Right ventricle myocardium inferior (tissue), 1 donor: ENCODE measurements at regions of chr17 and their contacts with region 1.

Region 1: DNA sequence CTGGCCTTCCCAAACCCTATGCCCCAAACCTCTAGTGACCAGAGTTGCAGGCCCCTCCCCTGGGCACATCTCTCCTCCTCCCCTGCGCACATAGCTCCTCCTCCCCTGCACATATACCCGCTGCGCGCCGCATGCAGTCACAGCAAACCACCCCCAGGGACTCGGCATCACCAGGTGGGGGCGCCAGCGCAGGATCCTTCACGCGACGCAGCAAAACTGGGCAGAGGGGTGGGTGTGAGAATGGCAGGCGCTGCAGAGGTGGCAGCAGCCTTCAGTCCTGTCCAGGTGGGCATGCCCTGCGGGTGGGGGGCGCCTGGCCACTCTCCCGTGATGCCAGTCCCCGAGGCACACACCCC is 5.6 kb downstream of the CORO6 start:
- DNase-seq: peak; percentile 89
- ATAC-seq: no peak

Region 2: DNA sequence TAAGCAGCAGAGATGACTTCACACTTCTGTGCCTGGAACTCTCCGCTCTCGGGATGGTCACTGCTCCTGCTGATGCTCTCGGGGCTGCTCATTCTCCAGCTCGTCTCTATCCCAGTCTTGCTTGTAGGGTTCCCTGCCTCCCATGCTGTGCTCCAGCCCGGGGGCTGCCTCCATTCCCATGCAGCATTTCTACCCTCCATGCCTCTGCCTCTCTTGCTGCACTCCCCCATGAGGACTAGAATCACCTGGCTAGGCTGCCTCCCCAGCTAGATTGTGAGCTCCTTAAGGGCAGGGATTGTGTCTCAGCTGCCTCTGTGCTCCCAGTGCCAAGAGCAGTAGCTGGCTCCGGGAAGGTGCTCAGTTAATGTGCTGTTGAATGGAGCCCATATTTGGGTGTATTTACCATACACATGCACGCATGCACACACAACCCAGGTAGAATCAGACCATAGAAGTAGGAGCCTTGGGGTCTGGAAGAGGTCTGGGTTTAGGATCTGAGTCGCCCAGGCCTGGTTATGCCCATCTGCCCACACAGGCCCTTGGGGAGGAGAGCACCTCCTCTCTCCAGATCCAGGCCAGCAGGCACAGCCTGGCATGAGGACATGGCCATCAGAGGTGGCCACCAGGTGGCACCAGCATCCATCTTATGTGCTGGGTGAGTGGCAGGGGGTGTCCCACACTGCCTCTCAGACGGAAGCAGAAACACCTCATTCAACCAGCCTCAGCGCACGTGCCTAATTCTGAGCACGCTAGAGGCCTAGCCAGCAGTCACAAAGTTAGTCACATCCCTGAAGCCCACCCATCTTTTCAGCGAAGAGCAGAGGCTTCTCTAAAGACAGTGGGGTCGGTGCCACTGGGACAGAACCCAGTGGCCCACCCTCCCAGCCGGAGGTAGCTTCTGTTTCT is 37.0 kb before region 1 on chr17:
- intact Hi-C with region 1: loop called (anchors 5 kb)
- DNase-seq: peak; percentile 91
- ATAC-seq: peak; percentile 83

Region 3: DNA sequence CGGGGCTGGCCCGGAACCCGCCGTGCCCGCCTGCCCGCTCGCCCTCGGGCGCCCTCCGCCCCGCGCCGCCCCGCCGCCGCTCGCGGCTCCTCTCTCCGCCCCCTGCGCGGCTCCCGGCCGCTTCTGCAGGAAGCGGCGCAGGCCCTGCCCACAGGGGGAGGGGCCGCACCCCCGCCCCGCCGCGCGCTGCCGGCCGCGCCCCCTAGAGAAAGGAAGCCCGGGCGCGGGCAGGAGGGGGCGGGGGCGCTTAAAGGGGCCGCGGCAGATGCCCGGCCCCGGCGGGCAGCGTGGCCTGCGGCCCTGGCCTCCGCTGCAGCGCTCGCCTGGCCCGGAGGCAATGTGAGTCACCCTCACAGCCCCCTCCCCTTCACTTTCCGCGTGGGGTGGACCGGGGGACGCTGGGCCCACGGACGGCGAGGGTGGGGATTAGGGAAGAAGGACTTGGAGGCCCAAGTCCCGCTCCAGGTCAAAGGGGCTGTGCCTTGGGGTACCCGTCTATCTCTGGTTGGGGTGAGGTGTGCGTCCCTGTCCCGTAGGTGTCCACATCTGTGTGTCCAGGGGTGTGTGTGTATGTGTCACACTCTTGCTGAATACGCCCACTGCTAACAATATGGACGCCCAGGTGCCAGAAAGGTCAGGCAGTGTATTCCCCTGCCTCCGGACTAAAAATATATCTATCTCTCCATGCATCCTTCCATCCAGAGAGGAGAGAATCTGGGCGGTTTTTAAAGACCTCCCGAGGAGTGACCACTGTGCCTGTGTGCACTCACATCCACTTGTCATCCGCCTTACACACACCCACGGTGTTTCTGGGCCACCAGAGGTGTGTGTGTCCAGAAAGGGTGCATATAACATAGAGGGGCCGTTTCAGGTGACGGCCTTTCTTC is 27.3 kb before region 1 on chr17 and contains the start of gene GIT1:
- intact Hi-C with region 1: loop called (anchors 2 kb)
- DNase-seq: peak; percentile 94
- ATAC-seq: peak; percentile 89
- total RNA-seq, gene GIT1: 33.0 TPM